CD4-positive, alpha-beta memory T cell (primary cell): ENCODE measurements at regions of chr5 and their contacts with region 1.

Region 1: GRCh38 chr5:54310433-54311175 is at the start of gene ARL15:
- DNase-seq: peak; percentile 98
- H3K4me3 ChIP-seq: peak within 1 kb of the TSS; percentile 84 to 96
- H3K4me3 Mint-ChIP-seq: peak within 1 kb of the TSS; percentile 91 to 99 (median 97)
- H3K27ac ChIP-seq: peak within 1 kb of the TSS; percentile 86
- H3K27ac Mint-ChIP-seq: peak within 1 kb of the TSS; percentile 94 to 98 (median 96)
- H3K4me1 ChIP-seq: peaks cover 16% of the 10 kb centered on the region
- H3K4me1 Mint-ChIP-seq: peaks cover 12 to 35% (median 26%) of the 10 kb centered on the region in 4 donors
- H3K27me3 ChIP-seq: no peaks in the 10 kb centered on the region
- H3K27me3 Mint-ChIP-seq: peaks cover 7 to 8% of the 10 kb centered on the region in 2 donors
- total RNA-seq, gene ARL15: 14.1 to 15.3 TPM

Region 2: GRCh38 chr5:53109443-53110127 is 1201.0 kb before region 1 on chr5 and contains the start of gene MOCS2:
- CTCF ChIA-PET with region 1: interaction called, 3 read pairs
- POLR2A ChIA-PET with region 1: interaction called, 4 read pairs
- intact Hi-C with region 1: loop called (anchors 1 kb)
- DNase-seq: peak; percentile 86 to 93 (median 91)
- H3K4me3 ChIP-seq: peak within 1 kb of the TSS; percentile 82 to 97
- H3K4me3 Mint-ChIP-seq: peak within 1 kb of the TSS; percentile 90 to 98 (median 95)
- H3K27ac ChIP-seq: peak within 1 kb of the TSS; percentile 68
- H3K27ac Mint-ChIP-seq: peak within 1 kb of the TSS; percentile 75 to 97 (median 95)
- H3K4me1 ChIP-seq: peaks cover 34% of the 10 kb centered on the region
- H3K4me1 Mint-ChIP-seq: peaks cover 31 to 59% (median 40%) of the 10 kb centered on the region in 4 donors
- H3K27me3 ChIP-seq: no peaks in the 10 kb centered on the region
- H3K27me3 Mint-ChIP-seq: no peaks in the 10 kb centered on the region
- total RNA-seq, gene MOCS2: 23.1 to 26.6 TPM

Region 3: GRCh38 chr5:54243473-54244080 is 67.0 kb before region 1 on chr5:
- CTCF ChIA-PET with region 1: interaction called, 10 read pairs
- POLR2A ChIA-PET with region 1: no interaction called
- intact Hi-C with region 1: loop called (anchors 1 kb)
- DNase-seq: peak in 4 of 5 donors; percentile 21 to 36 (median 28)
- H3K4me3 ChIP-seq: no peak overlapping the region
- H3K4me3 Mint-ChIP-seq: no peak overlapping the region
- H3K27ac ChIP-seq: no peak overlapping the region
- H3K27ac Mint-ChIP-seq: no peak overlapping the region
- H3K4me1 ChIP-seq: no peaks in the 10 kb centered on the region
- H3K4me1 Mint-ChIP-seq: peaks cover 3 to 9% (median 6%) of the 10 kb centered on the region in 4 donors
- H3K27me3 ChIP-seq: no peaks in the 10 kb centered on the region
- H3K27me3 Mint-ChIP-seq: no peaks in the 10 kb centered on the region

Region 4: DNA sequence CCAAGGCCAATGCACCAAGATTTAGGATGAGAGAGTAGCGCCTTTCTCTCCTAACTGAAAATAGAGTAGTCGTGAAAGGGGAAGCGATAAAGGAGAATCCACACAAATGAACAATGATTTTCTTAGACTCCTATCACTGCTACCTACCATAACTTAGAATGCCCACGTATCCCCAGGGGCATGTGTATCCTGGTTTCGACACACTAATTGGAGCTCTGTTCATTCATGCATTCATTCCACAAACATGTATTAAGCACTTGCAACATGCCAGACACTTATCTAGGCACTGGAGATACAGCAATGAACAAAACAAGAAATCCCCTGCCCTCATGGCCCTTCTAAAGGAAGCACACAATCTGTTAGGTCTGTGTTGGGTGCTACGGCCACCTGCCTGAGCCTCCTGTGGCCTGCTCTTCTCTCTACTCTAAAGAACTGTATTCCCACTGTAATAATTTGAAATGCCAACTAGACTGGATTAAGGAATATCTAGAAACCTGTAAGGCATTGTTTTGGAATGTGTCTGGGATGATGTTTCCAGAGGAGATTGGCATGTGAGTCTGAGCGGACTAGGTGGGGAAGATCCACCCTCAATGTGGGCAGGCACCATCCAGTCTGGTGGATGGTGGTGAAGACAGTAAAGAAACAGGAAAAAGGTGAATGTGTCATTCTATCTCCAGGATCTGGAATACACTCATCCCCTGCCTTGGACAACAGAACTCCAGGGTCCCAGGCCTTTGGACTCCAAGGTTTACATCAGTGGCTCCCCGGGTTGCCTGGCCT is 40.1 kb before region 1 on chr5:
- CTCF ChIA-PET with region 1: no interaction called
- POLR2A ChIA-PET with region 1: no interaction called
- intact Hi-C with region 1: no loop called
- DNase-seq: no peak
- H3K4me3 ChIP-seq: no peak overlapping the region
- H3K4me3 Mint-ChIP-seq: no peak overlapping the region
- H3K27ac ChIP-seq: no peak overlapping the region
- H3K27ac Mint-ChIP-seq: no peak overlapping the region
- H3K4me1 ChIP-seq: no peaks in the 10 kb centered on the region
- H3K4me1 Mint-ChIP-seq: peaks cover 6 to 15% (median 10%) of the 10 kb centered on the region in 4 donors
- H3K27me3 ChIP-seq: no peaks in the 10 kb centered on the region
- H3K27me3 Mint-ChIP-seq: no peaks in the 10 kb centered on the region

Region 5: DNA sequence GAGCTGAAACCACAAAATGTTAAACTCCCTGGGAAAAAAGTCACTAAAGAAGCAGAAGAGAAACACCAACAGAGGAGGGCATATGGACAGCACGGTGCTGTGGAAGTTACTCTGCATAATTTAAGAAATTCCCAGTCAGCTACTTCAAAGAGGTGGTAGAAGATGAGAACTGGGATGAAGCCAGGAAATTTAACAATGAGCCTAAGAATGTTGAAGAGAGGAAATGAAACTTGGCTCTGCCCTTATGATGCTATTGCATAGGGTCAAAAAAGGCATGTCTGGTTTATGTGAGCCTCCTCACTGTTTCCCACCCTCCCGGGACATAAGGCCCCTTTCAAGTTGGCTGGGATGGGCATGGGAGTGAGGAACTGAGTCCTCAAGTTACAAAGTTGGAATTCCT is 181.6 kb after region 1 on chr5:
- CTCF ChIA-PET with region 1: interaction called, 4 read pairs
- POLR2A ChIA-PET with region 1: no interaction called
- intact Hi-C with region 1: loop called (anchors 1 kb)
- DNase-seq: no peak
- H3K4me3 ChIP-seq: no peak overlapping the region
- H3K4me3 Mint-ChIP-seq: no peak overlapping the region
- H3K27ac ChIP-seq: no peak overlapping the region
- H3K27ac Mint-ChIP-seq: no peak overlapping the region
- H3K4me1 ChIP-seq: no peaks in the 10 kb centered on the region
- H3K4me1 Mint-ChIP-seq: peaks cover 0 to 4% (median 0%) of the 10 kb centered on the region in 4 donors
- H3K27me3 ChIP-seq: no peaks in the 10 kb centered on the region
- H3K27me3 Mint-ChIP-seq: peaks cover 3 to 7% of the 10 kb centered on the region in 2 donors

Region 6: DNA sequence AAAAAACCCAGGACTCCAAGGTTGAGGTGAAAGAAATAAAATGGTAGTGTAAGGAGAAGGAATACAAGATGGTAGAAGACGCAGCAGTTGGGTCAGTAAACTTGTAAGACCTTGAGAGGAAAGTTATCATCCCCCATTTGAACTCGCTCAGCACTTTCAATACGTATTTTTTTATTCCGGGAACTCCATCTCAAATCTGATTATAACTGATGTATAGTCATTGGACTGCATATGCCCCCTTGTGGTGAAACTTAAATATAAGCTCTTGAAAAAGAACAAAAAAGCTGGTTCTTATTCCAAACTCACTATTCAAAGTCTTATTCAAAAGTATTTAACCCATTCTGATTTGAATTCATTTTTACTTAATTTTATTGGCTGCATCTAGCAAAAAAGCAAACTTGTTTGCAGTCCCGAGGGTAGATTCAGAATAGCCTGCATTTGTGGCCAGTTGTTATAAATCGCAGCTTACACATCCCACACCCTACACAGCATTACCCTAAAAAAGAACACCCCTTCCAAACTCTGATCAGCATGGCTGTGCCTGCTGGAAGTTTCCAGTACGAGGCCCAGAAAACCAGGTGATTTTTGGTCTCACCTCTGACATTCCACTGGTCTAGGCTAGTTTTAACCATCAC is 556.8 kb after region 1 on chr5:
- CTCF ChIA-PET with region 1: no interaction called
- POLR2A ChIA-PET with region 1: interaction called, 4 read pairs
- intact Hi-C with region 1: loop called (anchors 1 kb)
- DNase-seq: peak in 4 of 5 donors; percentile 58 to 66 (median 62)
- H3K4me3 ChIP-seq: no peak overlapping the region
- H3K4me3 Mint-ChIP-seq: peak overlapping the region in 7 of 8 donors; percentile 15 to 75 (median 39)
- H3K27ac ChIP-seq: no peak overlapping the region
- H3K27ac Mint-ChIP-seq: peak overlapping the region in 2 of 7 donors; percentile 3 to 11
- H3K4me1 ChIP-seq: peaks cover 4% of the 10 kb centered on the region
- H3K4me1 Mint-ChIP-seq: peaks cover 0 to 5% (median 4%) of the 10 kb centered on the region in 4 donors
- H3K27me3 ChIP-seq: peaks cover 3% of the 10 kb centered on the region
- H3K27me3 Mint-ChIP-seq: peaks cover 26% of the 10 kb centered on the region in 2 donors

Region 7: DNA sequence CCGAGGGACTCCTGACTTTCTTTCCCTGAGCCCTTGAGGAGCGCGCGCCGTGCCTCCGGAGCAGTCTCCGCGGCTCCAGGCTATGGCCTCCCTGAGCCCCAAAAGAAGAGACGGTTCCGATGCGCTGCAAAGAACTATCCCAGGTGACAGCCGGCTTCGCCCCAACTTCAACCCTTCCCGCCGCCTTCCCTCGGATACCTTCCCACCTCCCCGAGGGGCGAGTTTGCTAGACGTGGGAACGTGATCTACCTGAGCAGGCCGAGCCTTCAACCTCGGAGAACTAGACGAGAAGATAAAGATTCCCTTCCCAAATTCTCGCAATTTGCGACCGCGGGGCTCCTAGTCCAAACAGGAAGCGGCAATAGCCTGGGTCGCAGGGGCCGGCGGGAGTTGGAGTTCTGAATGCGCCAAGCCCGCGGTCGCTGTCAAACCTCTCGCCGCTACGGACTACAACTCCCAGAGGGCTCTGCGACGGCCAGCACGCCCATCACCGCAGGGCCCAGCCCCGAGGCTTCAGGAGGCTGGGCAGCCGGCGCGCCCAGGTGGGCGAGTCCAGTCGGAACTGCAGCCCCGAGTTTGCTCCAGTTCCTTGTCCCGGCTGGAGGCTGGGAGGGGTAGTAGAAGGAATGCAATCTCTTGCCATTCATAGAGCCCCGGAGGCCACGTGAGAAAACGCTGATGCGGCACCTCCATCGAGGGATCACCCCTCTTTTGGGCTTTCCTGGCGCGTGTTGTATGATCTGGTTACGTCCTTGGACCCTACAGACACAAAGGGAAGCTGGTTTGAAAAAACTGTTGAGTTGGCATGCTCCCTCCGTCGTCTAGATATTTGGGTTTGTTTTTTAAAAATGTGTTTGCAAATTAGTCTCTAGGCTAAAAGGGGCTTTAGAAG is 1401.6 kb after region 1 on chr5 and contains the start of gene SLC38A9:
- CTCF ChIA-PET with region 1: no interaction called
- POLR2A ChIA-PET with region 1: no interaction called
- intact Hi-C with region 1: no loop called
- DNase-seq: peak; percentile 86 to 94 (median 89)
- H3K4me3 ChIP-seq: peak within 1 kb of the TSS; percentile 83 to 89
- H3K4me3 Mint-ChIP-seq: peak within 1 kb of the TSS; percentile 99 to 100 (median 99)
- H3K27ac ChIP-seq: peak within 1 kb of the TSS; percentile 78
- H3K27ac Mint-ChIP-seq: peak within 1 kb of the TSS; percentile 89 to 97 (median 96)
- H3K4me1 ChIP-seq: peaks cover 14% of the 10 kb centered on the region
- H3K4me1 Mint-ChIP-seq: peaks cover 15 to 33% (median 21%) of the 10 kb centered on the region in 4 donors
- H3K27me3 ChIP-seq: no peaks in the 10 kb centered on the region
- H3K27me3 Mint-ChIP-seq: no peaks in the 10 kb centered on the region
- total RNA-seq, gene SLC38A9: 28.0 to 28.2 TPM